Activated B cell treated with CpG ODN at 0.5 μM for 24 hours (primary cell): ENCODE measurements at regions of chr16 and their contacts with region 1.

Region 1: GRCh38 chr16:10806698-10807097 is 11.9 kb downstream of the TVP23A start:
- DNase-seq: no peak
- ATAC-seq: peak; percentile 54
- H3K4me3 Mint-ChIP-seq: peak overlapping the region; percentile 46
- H3K27ac Mint-ChIP-seq: peak overlapping the region; percentile 89
- H3K4me1 Mint-ChIP-seq: peaks cover 79% of the 10 kb centered on the region
- H3K27me3 Mint-ChIP-seq: no peaks in the 10 kb centered on the region
- CTCF ChIP-seq: no peak

Region 2: DNA sequence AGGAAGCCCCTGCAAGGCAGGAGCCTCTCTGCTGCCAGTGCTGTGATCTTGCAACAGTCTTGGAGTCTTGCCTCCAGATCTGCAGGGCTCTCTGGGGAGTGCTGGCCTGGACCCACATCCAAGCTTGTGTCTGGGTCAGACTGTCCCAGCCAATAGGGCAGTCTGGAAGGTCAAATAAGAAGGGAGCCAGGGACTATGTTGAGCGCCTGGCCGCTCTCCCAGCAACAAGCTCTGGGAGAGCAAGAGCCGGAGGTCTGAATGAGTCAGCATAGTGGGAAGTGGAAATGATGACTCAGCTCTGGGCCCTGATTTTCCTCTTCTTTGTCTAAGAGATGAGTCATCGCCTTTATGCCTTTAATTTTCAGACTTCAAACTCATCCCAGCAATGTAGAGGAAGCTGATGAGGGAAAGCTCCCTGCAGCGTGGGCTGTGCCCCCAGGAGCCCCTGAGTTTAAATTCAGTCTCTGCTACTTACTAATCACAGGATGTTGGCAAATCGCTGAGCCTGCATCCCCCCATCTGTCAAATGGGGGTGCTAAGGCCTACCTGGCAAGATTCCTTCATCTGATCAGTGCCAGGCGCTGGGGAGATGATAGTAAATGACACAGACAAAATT is 1758.9 kb before region 1 on chr16:
- CTCF ChIA-PET with region 1: no interaction called
- POLR2A ChIA-PET with region 1: no interaction called
- intact Hi-C with region 1: no loop called
- DNase-seq: no peak
- ATAC-seq: peak; percentile 49
- H3K4me3 Mint-ChIP-seq: no peak overlapping the region
- H3K27ac Mint-ChIP-seq: no peak overlapping the region
- H3K4me1 Mint-ChIP-seq: no peaks in the 10 kb centered on the region
- H3K27me3 Mint-ChIP-seq: peaks cover 2% of the 10 kb centered on the region
- CTCF ChIP-seq: no peak

Region 3: DNA sequence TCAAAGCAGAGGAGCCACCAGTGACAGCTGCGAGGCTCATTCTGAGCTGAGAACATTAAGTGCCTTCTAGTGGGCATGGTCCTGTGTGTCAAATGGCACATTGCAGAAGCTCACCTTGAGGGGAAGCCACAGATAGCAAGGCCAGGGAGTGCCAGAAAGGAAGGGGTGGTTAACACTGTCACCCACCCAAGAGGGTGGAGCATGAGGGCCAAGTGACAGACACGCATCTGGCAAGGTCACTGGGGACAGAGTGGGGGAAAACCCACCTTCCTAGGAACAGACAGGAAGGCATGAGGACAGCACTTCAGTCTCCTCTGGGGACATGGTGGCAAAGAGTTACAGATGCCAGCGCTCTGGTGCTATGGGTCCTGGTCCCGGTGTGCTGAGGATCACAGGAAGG is 40.9 kb before region 1 on chr16:
- CTCF ChIA-PET with region 1: no interaction called
- POLR2A ChIA-PET with region 1: interaction called, 3 read pairs
- intact Hi-C with region 1: loop called (anchors 2 kb)
- DNase-seq: peak; percentile 57
- ATAC-seq: peak; percentile 97
- H3K4me3 Mint-ChIP-seq: peak overlapping the region; percentile 56
- H3K27ac Mint-ChIP-seq: peak overlapping the region; percentile 84
- H3K4me1 Mint-ChIP-seq: peaks cover 44% of the 10 kb centered on the region
- H3K27me3 Mint-ChIP-seq: no peaks in the 10 kb centered on the region
- CTCF ChIP-seq: no peak

Region 4: GRCh38 chr16:10776280-10776679 is 30.4 kb before region 1 on chr16:
- CTCF ChIA-PET with region 1: no interaction called
- POLR2A ChIA-PET with region 1: interaction called, 3 read pairs
- intact Hi-C with region 1: loop called (anchors 1 kb)
- DNase-seq: no peak
- ATAC-seq: peak; percentile 26
- H3K4me3 Mint-ChIP-seq: no peak overlapping the region
- H3K27ac Mint-ChIP-seq: peak overlapping the region; percentile 9
- H3K4me1 Mint-ChIP-seq: peaks cover 41% of the 10 kb centered on the region
- H3K27me3 Mint-ChIP-seq: no peaks in the 10 kb centered on the region
- CTCF ChIP-seq: no peak

Region 5: GRCh38 chr16:10787304-10787703 is 19.4 kb before region 1 on chr16:
- CTCF ChIA-PET with region 1: no interaction called
- POLR2A ChIA-PET with region 1: interaction called, 3 read pairs
- intact Hi-C with region 1: loop called (anchors 2 kb)
- DNase-seq: peak; percentile 29
- ATAC-seq: peak; percentile 92
- H3K4me3 Mint-ChIP-seq: no peak overlapping the region
- H3K27ac Mint-ChIP-seq: peak overlapping the region; percentile 44
- H3K4me1 Mint-ChIP-seq: peaks cover 52% of the 10 kb centered on the region
- H3K27me3 Mint-ChIP-seq: no peaks in the 10 kb centered on the region
- CTCF ChIP-seq: no peak

Region 6: DNA sequence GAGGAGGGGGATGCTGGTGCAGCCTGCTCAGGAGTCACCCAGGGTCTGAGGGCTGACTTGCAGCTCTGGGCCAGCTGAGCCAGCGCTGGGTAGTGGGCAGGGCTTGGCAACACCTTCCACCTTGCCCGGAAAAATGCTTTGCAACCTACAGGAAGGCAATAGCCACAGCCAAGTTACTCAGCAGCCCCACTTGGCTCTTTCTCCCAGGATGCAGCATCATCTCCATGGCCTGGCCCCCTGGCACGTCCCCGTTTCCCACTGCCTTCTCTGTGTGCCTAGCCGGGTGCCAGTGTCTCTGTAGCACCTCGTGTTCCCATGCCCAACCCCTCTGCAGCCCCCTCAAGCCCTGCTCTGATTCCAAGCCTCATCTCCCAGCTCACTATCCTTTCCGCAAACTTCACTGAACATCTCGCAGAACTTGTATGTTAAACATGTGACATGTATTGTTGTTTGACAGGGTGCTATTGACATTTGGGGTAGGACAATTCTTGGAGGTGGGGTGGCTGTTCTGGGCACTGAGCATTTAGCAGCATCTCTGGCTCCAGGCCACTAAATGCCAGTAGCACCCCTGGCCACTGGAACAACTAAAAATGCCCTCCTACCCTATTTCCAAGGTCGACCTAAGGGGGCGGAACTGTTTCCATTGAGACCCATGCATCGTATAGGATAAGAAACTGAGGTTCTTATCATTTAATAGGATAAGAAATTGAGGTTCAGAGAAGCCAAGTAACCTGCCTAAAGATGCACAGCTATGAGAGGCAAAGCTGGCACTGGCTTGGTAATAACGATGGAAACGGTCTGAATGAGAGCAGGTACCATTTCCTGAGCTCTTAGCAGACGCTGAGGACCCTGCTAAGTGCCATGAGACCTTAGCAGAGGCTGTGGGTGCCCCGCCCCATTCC is 123.4 kb after region 1 on chr16:
- CTCF ChIA-PET with region 1: no interaction called
- POLR2A ChIA-PET with region 1: no interaction called
- intact Hi-C with region 1: no loop called
- DNase-seq: no peak
- ATAC-seq: peak; percentile 14
- H3K4me3 Mint-ChIP-seq: peak overlapping the region; percentile 5
- H3K27ac Mint-ChIP-seq: peak overlapping the region; percentile 71
- H3K4me1 Mint-ChIP-seq: peaks cover 54% of the 10 kb centered on the region
- H3K27me3 Mint-ChIP-seq: no peaks in the 10 kb centered on the region
- CTCF ChIP-seq: no peak